ENCODE measurements at regions of chr14 and their contacts with region 1.

Region 1: DNA sequence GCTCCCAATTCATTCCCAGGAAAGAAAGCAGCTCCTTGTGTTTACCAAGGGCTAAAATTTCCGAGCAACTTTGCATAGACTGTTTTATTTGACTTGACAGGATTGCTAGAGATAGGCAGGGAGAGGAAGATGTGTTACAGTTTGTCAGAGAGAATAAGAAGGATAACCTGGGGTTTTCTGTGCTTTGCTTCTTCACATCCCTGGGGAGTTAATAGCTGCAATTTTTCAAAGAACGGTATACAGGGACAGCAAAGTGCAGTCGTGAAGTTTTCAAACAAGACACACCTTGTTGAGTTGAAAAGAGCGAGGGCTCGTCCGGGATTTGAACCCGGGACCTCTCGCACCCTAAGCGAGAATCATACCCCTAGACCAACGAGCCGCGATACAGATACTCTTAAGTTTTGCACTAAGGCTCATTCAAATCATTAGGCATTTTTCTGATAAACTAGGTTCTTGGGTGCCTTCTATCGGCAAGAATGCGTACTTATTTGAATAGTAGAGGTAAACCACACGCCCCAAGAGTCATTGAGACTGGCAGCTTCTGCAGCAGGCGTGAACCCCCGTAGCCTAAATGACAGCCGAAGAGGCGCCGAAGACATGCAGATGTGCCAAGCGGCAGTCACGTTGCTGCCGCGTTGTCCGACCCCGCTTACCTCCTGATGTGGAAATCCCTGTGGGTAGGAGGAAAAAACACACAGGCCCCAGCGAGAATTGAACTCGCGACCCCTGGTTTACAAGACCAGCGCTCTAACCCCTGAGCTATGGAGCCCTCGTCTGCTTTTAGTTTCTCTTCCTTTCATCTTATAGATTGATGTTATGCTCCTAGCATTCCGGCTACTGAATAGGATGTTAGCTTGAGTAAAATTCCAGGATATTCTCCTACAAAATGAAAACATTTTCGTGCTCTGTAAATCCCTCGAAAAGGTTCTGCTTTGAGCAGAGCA is 22.2 kb upstream of the RNASE12 start:
- DNase-seq: peak; percentile 94
- H3K4me3 Mint-ChIP-seq: no peak overlapping the region
- H3K27ac Mint-ChIP-seq: no peak overlapping the region
- H3K4me1 Mint-ChIP-seq: peaks cover 14% of the 10 kb centered on the region
- H3K27me3 Mint-ChIP-seq: peaks cover 1% of the 10 kb centered on the region

Region 2: DNA sequence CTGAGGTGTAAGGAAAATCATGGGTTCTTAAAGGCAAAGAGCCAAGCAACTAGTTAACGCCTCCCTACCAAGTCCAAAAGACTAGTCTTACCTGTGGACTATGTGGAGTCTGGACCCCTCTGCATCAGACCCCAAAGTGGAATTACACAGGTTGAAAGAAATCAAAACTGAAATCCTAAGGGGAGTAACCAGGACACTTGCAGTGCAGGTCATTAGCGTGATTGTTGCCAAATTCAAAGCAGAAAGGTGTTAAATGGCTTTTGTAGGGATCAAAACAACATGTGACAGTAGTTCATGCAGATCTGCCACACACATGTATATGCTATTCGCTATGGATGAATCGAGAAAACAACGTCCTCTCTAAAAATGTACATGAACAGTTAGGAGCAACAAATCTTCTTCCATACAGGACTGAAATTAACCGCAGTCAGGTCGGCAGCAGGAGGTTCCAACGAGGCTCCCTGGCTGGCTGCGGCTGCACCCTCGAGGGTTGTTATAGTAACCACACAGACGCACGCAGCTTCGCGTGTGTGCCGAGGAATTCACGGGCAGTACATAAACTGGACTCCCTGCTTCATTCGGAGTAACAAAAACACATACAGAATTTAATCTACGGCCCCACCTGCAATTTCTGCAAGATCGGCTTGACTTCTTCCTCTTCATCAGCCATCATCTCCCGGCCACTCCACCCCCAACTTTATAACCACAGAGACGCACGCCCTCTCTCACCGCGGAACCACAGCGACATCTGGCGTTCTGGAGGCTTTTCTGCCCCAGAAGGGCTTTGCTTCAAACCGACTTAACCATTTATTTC is 307.9 kb before region 1 on chr14 and contains the start of gene TTC5:
- intact Hi-C with region 1: loop called (anchors 1 kb)
- DNase-seq: peak; percentile 97
- H3K4me3 Mint-ChIP-seq: peak within 1 kb of the TSS; percentile 90
- H3K27ac Mint-ChIP-seq: peak within 1 kb of the TSS; percentile 79
- H3K4me1 Mint-ChIP-seq: peaks cover 21% of the 10 kb centered on the region
- H3K27me3 Mint-ChIP-seq: peaks cover 2% of the 10 kb centered on the region
- total RNA-seq, gene TTC5: 36.2 and 39.7 TPM in 2 replicates

Region 3: GRCh38 chr14:20343092-20343861 is 270.1 kb before region 1 on chr14 and contains the start of gene PARP2:
- intact Hi-C with region 1: loop called (anchors 1 kb)
- DNase-seq: peak; percentile 98
- H3K4me3 Mint-ChIP-seq: peak within 1 kb of the TSS; percentile 99
- H3K27ac Mint-ChIP-seq: peak within 1 kb of the TSS; percentile 97
- H3K4me1 Mint-ChIP-seq: peaks cover 18% of the 10 kb centered on the region
- H3K27me3 Mint-ChIP-seq: peaks cover 2% of the 10 kb centered on the region
- total RNA-seq, gene PARP2: 32.0 and 33.1 TPM in 2 replicates

Region 4: DNA sequence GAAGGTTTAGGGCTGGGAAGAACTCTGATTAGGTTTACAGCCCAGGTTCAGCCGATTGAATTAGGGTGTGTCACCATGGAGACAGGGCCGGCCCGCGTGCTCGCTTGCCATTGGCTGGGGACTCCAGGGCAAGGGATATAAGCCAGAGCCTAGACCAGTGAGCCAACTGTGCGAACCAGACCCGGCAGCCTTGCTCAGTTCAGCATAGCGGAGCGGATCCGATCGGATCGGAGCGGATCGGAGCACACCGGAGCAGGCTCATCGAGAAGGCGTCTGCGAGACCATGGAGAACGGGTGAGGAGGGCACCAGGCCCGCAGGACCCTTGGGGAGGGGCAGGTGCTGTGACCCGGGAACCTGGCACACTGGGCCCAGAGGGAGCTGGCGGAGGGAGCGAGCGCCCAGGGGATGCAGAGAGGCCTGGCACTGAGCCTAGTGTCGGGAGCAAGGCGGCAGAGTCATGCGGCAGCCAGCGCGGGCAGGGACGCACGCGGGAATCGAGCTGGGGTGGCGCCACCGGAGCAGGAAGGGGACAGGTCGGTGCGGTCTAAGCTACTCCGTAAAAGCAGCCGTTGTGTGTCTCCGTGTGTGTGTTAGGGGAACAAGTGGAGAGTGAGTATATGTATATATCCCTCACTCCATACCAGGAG is 144.0 kb before region 1 on chr14 and contains the start of gene PNP:
- intact Hi-C with region 1: loop called (anchors 1 kb)
- DNase-seq: peak; percentile 96
- H3K4me3 Mint-ChIP-seq: peak within 1 kb of the TSS; percentile 95
- H3K27ac Mint-ChIP-seq: peak within 1 kb of the TSS; percentile 100
- H3K4me1 Mint-ChIP-seq: peaks cover 36% of the 10 kb centered on the region
- H3K27me3 Mint-ChIP-seq: peaks cover 2% of the 10 kb centered on the region
- total RNA-seq, gene PNP: 155 and 158 TPM in 2 replicates

Region 5: GRCh38 chr14:20632682-20633428 is 19.5 kb after region 1 on chr14:
- intact Hi-C with region 1: loop called (anchors 1 kb)
- DNase-seq: peak; percentile 89
- H3K4me3 Mint-ChIP-seq: peak overlapping the region; percentile 88
- H3K27ac Mint-ChIP-seq: peak overlapping the region; percentile 84
- H3K4me1 Mint-ChIP-seq: peaks cover 38% of the 10 kb centered on the region
- H3K27me3 Mint-ChIP-seq: peaks cover 75% of the 10 kb centered on the region

Region 6: DNA sequence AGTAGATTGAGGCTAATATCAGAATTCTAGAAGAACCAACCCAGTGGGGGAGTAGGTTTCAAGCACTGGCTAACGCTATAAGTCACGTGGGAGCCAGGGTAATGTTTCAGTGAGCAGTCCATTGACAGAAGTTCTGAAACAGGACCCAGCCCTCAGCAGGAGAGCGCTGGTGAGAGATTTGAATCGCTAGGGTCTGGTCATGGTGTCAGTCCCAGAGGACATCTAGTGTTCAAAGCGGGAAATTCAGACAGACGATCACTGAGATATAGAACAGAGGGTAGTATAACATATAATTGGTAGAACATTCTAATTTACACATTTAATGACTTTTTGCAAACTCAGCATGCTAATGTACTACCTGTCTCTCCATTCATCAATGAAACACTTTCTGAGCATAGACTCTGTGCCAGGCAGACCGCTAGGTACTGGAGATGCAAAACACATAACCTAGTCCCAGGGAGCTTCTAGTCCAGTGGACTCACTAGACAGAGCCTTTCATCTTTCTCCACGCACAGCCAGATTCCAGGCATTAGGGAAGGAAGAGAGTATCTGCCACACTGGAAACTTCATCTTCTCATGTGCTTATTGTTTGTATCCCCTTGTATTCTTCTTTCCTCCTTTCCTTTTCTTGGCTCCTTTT is 242.4 kb after region 1 on chr14:
- intact Hi-C with region 1: loop called (anchors 2 kb)
- DNase-seq: peak; percentile 83
- H3K4me3 Mint-ChIP-seq: no peak overlapping the region
- H3K27ac Mint-ChIP-seq: no peak overlapping the region
- H3K4me1 Mint-ChIP-seq: peaks cover 5% of the 10 kb centered on the region
- H3K27me3 Mint-ChIP-seq: peaks cover 27% of the 10 kb centered on the region